Left ventricle myocardium inferior (tissue), 1 donor: ENCODE measurements at regions of chr7 and their contacts with region 1.

Region 1: DNA sequence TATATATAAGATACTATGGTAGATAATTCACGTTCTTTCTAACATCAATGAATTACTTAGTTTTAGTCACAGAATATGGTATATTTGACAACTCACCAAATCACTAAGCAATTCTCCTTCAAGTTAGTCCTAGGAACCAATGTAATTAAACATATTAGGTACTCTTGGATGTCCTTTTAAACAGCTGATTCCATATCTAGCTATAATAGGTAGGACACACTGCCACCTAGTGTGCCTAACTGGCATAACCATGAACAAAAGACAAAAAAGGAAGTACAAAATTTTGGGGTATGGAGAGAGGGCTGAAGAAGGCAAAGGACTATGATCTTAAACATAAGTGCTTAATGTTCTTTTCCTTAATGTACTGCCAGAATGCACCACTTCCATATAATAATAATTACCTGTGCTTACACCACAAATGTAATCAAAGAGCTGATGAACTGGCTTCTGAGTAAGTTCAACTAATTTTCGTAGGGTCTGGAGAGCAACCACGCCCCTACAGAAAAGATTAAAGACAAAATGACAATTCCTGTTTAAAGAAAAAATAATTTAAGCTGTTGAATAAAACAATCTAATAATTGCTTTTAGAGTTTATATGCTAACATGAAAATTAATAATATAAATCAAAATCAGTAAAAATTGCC is 28.7 kb downstream of the PNPLA8 start:
- DNase-seq: no peak
- H3K4me3 ChIP-seq: no peak overlapping the region
- H3K27ac ChIP-seq: no peak overlapping the region
- H3K4me1 ChIP-seq: no peaks in the 10 kb centered on the region
- H3K27me3 ChIP-seq: no peaks in the 10 kb centered on the region
- CTCF ChIP-seq: peak; percentile 85

Region 2: DNA sequence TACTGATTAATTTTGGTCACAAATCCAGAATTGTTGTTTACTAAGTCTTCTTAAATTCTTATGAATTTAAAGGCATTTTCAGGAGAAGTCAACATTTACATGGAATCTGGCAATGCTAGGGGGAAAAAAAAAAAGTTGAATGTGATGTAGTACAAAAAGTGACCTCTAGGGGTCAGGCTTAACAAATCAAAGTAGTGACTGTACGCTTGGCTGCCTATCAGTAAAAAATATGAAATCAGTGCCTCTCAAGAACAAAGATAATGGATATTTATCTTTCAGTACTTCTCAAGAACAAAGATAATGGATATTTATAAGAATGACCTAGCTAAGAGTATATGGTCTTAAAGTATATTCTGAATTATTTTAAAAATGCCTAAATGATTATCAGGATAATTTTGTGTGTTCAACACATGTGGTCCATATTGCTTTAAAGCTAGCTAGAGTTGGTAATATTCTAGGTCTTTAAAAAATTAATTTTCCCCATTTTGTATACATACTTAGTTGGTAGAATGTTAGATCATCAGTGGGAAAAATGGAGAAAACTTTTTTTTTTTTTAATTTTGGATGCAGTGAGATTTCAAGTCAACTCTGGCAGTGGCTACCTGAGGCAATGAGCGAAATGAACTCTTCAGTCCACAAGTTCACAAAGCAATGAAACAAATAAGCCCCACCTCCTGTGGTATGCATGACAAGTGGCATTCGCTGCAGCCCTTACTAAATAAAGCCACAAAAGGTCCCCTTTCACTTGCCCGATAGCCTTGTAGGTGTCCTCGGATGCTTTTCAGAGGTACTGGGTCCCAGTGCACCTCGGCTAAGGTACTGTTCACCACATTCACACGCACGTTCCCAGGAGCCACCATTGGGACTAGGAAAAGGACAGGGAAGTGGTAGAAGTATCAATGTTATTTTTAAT is 315.9 kb before region 1 on chr7:
- intact Hi-C with region 1: loop called (anchors 5 kb)
- DNase-seq: no peak
- H3K4me3 ChIP-seq: no peak overlapping the region
- H3K27ac ChIP-seq: no peak overlapping the region
- H3K4me1 ChIP-seq: no peaks in the 10 kb centered on the region
- H3K27me3 ChIP-seq: no peaks in the 10 kb centered on the region
- CTCF ChIP-seq: peak; percentile 83